Body of pancreas (tissue), 4 donors: ENCODE measurements at regions of chr20 and their contacts with region 1.

Region 1: GRCh38 chr20:57383447-57384347 is 7.5 kb upstream of the RBM38 start:
- DNase-seq: no peak
- ATAC-seq: no peak
- H3K4me3 ChIP-seq: no peak overlapping the region
- H3K27ac ChIP-seq: no peak overlapping the region
- H3K4me1 ChIP-seq: no peaks in the 10 kb centered on the region
- H3K27me3 ChIP-seq: no peaks in the 10 kb centered on the region
- CTCF ChIP-seq: no peak
- POLR2A ChIP-seq: no peak

Region 2: GRCh38 chr20:57493091-57493615 is 109.5 kb after region 1 on chr20:
- intact Hi-C with region 1: loop called (anchors 5 kb)
- DNase-seq: no peak
- ATAC-seq: no peak
- H3K4me3 ChIP-seq: no peak overlapping the region
- H3K27ac ChIP-seq: no peak overlapping the region
- H3K4me1 ChIP-seq: no peaks in the 10 kb centered on the region
- H3K27me3 ChIP-seq: no peaks in the 10 kb centered on the region
- CTCF ChIP-seq: no peak
- POLR2A ChIP-seq: no peak